WTC11 (cell line): ENCODE measurements at regions of chrX and their contacts with region 1.

Region 1: GRCh38 chrX:53683556-53684414 is 2.7 kb downstream of the HUWE1 start:
- DNase-seq: peak; percentile 88
- ATAC-seq: peak; percentile 74
- H3K4me3 Mint-ChIP-seq: peak overlapping the region; percentile 88
- H3K27ac Mint-ChIP-seq: peak overlapping the region; percentile 96
- H3K4me1 Mint-ChIP-seq: peaks cover 14% of the 10 kb centered on the region
- H3K27me3 Mint-ChIP-seq: no peaks in the 10 kb centered on the region; the same call in 1 of the 2 replicates
- CTCF ChIP-seq: no peak

Region 2: GRCh38 chrX:53714580-53715345 is 31.0 kb after region 1 on chrX:
- CTCF ChIA-PET with region 1: interaction called, 3 read pairs
- POLR2A ChIA-PET with region 1: interaction called, 10 read pairs
- DNase-seq: peak; percentile 14
- ATAC-seq: peak; percentile 77
- H3K4me3 Mint-ChIP-seq: no peak overlapping the region
- H3K27ac Mint-ChIP-seq: no peak overlapping the region
- H3K4me1 Mint-ChIP-seq: peaks cover 12% of the 10 kb centered on the region
- H3K27me3 Mint-ChIP-seq: no peaks in the 10 kb centered on the region
- CTCF ChIP-seq: no peak